Left cardiac atrium (tissue), 4 donors: ENCODE measurements at regions of chr1 and their contacts with region 1.

Region 1: GRCh38 chr1:27154991-27155781 is at the start of gene SLC9A1:
- DNase-seq: peak; percentile 96
- ATAC-seq: peak; percentile 90 to 91
- total RNA-seq, gene SLC9A1: 17.4 to 37.3 TPM

Region 2: GRCh38 chr1:27116697-27117096 is 38.5 kb before region 1 on chr1:
- intact Hi-C with region 1: loop called in 1 of 2 experiments (anchors 5 kb)
- DNase-seq: no peak
- ATAC-seq: no peak

Region 3: DNA sequence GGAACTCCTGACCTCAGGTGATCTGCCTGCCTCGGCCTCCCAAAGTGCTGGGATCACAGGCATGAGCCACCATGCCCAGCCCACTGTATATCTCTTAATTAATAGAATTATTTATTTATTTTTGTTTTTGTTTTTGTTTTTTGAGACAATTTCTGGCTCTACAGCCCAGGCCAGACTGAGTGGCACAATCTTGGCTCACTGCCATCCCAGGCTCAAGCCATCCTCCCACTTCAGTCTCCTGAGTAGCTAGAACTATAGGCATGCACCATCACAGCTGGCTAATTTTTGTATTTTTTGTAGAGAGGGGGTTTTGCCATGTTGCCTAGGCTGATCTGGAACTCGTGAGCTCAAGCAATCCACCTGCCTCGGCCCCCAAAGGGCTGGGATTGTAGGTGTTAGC is 63.5 kb after region 1 on chr1:
- intact Hi-C with region 1: no loop called
- DNase-seq: no peak
- ATAC-seq: no peak